GM12878 (cell line): ENCODE measurements at regions of chr5 and their contacts with region 1.

Region 1: GRCh38 chr5:157575381-157576020 is at the start of gene ADAM19:
- DNase-seq: no peak
- ATAC-seq: peak; percentile 77
- H3K4me3 ChIP-seq: peak within 1 kb of the TSS; percentile 75
- H3K27ac ChIP-seq: peak within 1 kb of the TSS; percentile 67
- H3K4me1 ChIP-seq: peaks cover 51% of the 10 kb centered on the region
- H3K27me3 ChIP-seq: no peaks in the 10 kb centered on the region
- CTCF ChIP-seq: no peak
- EP300 ChIP-seq: no peak
- POLR2A ChIP-seq: peak; percentile 79
- RAD21 ChIP-seq: no peak
- polyA plus RNA-seq, gene ADAM19: 16.0 to 24.4 TPM

Region 2: GRCh38 chr5:157502143-157502647 is 73.3 kb before region 1 on chr5:
- CTCF ChIA-PET with region 1: interaction called, 3 read pairs
- POLR2A ChIA-PET with region 1: interaction called, 3 read pairs
- RAD21 ChIA-PET with region 1: interaction called, 11 read pairs
- SMC1A ChIA-PET with region 1: interaction called, 12 read pairs
- in situ Hi-C with region 1: no loop called
- intact Hi-C with region 1: loop called (anchors 2 kb)
- DNase-seq: peak; percentile 82
- ATAC-seq: peak; percentile 83
- H3K4me3 ChIP-seq: no peak overlapping the region
- H3K27ac ChIP-seq: peak overlapping the region; percentile 89
- H3K4me1 ChIP-seq: peaks cover 70% of the 10 kb centered on the region
- H3K27me3 ChIP-seq: no peaks in the 10 kb centered on the region
- CTCF ChIP-seq: no peak
- EP300 ChIP-seq: peak; percentile 51 to 88; a peak in 3 of 4 replicates
- POLR2A ChIP-seq: no peak
- RAD21 ChIP-seq: 0 out of 2 replicates have a peak, but pooled peaks have one; percentile 13

Region 3: GRCh38 chr5:157540707-157541446 is 34.6 kb before region 1 on chr5:
- CTCF ChIA-PET with region 1: interaction called, 4 read pairs
- POLR2A ChIA-PET with region 1: interaction called, 9 read pairs
- RAD21 ChIA-PET with region 1: interaction called, 26 read pairs
- SMC1A ChIA-PET with region 1: interaction called, 15 read pairs
- in situ Hi-C with region 1: no loop called
- intact Hi-C with region 1: loop called (anchors 1 kb)
- DNase-seq: peak; percentile 87
- ATAC-seq: peak; percentile 93
- H3K4me3 ChIP-seq: peak overlapping the region; percentile 56
- H3K27ac ChIP-seq: peak overlapping the region; percentile 92
- H3K4me1 ChIP-seq: peaks cover 49% of the 10 kb centered on the region
- H3K27me3 ChIP-seq: no peaks in the 10 kb centered on the region
- CTCF ChIP-seq: no peak
- EP300 ChIP-seq: peak; percentile 50 to 64; a peak in 2 of 4 replicates
- POLR2A ChIP-seq: peak; percentile 51
- RAD21 ChIP-seq: peak; percentile 12; the same call in 1 of the 2 replicates

Region 4: DNA sequence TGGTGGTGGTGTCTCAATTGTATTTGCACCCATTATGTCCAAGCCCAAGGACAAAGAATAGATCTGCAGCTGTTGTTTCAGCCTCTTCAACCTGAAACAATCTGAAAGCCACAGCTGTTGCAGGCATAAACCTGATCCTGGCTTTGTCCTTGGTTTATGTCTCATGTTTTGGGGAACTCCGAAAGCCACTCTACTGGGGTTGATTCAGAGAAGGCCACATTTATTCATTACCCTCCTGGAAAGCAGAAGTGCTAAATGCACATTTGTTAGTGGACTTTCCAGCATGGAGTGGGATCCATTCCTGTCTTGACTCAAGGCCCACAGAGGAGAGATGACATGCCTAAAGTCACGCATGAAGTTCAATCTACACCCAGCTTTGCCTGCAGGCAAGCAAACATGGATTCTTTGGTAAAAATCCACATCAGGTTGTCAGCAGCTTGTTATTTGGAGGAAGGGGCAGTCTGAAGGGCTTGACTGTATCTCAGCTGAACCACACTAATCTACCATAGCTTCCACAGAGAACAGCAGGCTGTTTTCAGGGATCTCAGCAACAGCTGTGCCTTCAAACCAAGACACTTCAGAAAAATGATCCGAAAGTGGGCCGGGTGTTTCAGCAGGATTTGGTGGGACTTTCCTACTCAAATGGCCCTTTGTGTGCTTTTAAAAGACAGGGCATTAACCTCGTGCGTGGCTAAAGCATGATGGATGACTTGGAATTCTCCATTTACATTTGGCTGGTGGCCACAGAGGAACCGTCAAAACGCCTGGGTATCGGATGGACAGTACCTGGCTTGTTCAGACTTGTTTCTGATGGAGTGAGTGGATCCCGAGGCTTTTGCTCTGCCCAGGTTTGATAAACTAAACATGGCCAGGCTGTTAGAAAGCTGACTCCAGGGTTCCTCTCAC is 36.3 kb after region 1 on chr5:
- CTCF ChIA-PET with region 1: interaction called, 5 read pairs
- POLR2A ChIA-PET with region 1: interaction called, 5 read pairs
- RAD21 ChIA-PET with region 1: interaction called, 4 read pairs
- SMC1A ChIA-PET with region 1: interaction called, 16 read pairs
- in situ Hi-C with region 1: no loop called
- intact Hi-C with region 1: loop called (anchors 5 kb)
- DNase-seq: peak; percentile 79
- ATAC-seq: peak; percentile 82
- H3K4me3 ChIP-seq: no peak overlapping the region
- H3K27ac ChIP-seq: peak overlapping the region; percentile 69
- H3K4me1 ChIP-seq: peaks cover 38% of the 10 kb centered on the region
- H3K27me3 ChIP-seq: no peaks in the 10 kb centered on the region
- CTCF ChIP-seq: no peak
- EP300 ChIP-seq: peak; percentile 46 to 80; a peak in 1 of 4 replicates
- POLR2A ChIP-seq: no peak
- RAD21 ChIP-seq: no peak

Region 5: GRCh38 chr5:157670662-157671591 is 95.4 kb after region 1 on chr5 and contains the start of gene C5orf52:
- CTCF ChIA-PET with region 1: no interaction called
- POLR2A ChIA-PET with region 1: interaction called, 3 read pairs
- RAD21 ChIA-PET with region 1: interaction called, 3 read pairs
- SMC1A ChIA-PET with region 1: no interaction called
- in situ Hi-C with region 1: no loop called
- intact Hi-C with region 1: loop called (anchors 5 kb)
- DNase-seq: peak; percentile 23
- ATAC-seq: peak; percentile 72
- H3K4me3 ChIP-seq: peak within 1 kb of the TSS; percentile 68
- H3K27ac ChIP-seq: no peak within 1 kb of the TSS
- H3K4me1 ChIP-seq: peaks cover 5% of the 10 kb centered on the region
- H3K27me3 ChIP-seq: no peaks in the 10 kb centered on the region; a peak in 3 of 4 replicates
- CTCF ChIP-seq: no peak
- EP300 ChIP-seq: no peak
- POLR2A ChIP-seq: no peak
- RAD21 ChIP-seq: 0 out of 2 replicates have a peak, but pooled peaks have one; percentile 3
- polyA plus RNA-seq, gene C5orf52: not detected

Region 6: DNA sequence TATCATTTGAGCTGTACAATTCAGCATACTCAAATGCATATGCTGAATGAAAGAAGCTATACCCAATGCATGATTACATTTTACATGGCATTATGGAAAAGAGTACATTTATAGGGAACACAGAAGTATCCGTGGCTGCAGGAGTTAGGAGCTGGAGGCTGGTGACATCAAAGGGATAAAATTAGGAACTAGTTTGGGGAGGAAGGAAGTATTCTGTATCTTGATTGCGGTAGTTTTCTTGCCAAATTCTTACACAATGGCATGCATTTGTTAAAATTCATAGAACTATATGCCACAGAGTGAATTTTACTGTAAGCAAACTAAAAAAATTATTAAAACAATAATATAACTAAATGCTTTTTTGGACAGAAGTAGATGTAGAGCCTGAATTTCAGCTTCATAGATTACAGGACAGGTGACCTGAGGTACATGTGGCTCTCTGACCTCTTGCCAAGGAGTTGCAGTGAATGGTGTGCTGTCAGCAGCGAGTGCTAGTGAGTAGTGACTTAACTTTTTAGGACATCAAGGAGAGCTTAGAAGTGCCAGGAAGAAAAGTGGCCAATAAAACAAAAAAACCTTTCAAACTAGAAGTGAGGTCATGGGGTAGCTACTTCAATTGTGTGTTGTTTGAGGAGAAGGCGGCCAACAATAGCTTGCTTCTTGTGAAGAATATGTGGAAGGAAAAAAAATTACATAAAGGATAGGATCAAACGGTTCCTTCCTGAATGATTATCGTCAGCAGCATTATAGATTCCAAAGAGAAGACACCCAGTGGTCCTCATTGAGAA is 798.3 kb after region 1 on chr5:
- CTCF ChIA-PET with region 1: no interaction called
- POLR2A ChIA-PET with region 1: no interaction called
- RAD21 ChIA-PET with region 1: no interaction called
- SMC1A ChIA-PET with region 1: no interaction called
- in situ Hi-C with region 1: no loop called
- intact Hi-C with region 1: no loop called
- DNase-seq: no peak
- ATAC-seq: no peak
- H3K4me3 ChIP-seq: no peak overlapping the region
- H3K27ac ChIP-seq: no peak overlapping the region
- H3K4me1 ChIP-seq: no peaks in the 10 kb centered on the region
- H3K27me3 ChIP-seq: no peaks in the 10 kb centered on the region
- CTCF ChIP-seq: no peak
- EP300 ChIP-seq: no peak
- POLR2A ChIP-seq: no peak
- RAD21 ChIP-seq: no peak